ENCODE measurements at regions of chr14 and their contacts with region 1.

Region 1: DNA sequence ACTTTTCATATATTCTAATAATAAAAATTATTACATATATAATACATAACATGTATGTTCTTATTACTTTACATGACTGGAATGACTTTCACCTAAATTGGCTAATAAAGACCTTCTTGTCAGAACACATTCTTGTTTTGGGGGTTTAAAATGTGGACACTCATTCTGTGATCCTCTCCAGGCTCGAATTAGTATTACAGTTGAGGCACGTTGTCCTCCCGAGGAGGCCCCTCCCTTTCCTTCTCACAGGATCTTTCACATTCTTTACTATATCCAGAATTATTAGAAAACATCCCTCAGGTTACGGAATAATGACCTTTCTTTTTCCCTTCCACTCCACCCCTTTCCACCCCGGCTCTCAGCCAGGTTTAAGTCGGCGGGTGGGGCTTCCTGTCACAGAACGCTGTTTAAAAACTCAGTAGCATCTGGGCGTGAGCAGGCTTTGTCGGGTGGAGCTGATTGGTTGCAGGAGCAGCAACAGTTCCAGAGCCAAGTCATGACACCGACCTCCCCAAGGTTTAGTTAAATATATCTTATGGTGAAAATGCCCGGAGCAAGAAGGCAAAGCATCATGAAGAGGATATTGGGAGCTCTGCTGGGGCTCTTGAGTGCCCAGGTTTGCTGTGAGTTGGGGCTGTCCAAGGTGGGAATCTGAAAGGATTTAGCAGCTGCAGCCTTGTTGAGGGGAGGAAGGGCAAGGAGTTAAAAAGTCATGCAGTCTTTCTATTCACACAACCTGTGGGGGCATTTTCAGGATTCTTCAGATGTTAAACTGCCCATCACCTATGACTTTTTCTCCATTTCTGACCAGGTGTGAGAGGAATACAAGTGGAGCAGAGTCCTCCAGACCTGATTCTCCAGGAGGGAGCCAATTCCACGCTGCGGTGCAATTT is 396.7 kb upstream of the OR4E1 start:
- DNase-seq: peak; percentile 67
- H3K4me3 Mint-ChIP-seq: peak overlapping the region; percentile 88
- H3K27ac Mint-ChIP-seq: peak overlapping the region; percentile 90
- H3K4me1 Mint-ChIP-seq: peaks cover 33% of the 10 kb centered on the region
- H3K27me3 Mint-ChIP-seq: no peaks in the 10 kb centered on the region

Region 2: DNA sequence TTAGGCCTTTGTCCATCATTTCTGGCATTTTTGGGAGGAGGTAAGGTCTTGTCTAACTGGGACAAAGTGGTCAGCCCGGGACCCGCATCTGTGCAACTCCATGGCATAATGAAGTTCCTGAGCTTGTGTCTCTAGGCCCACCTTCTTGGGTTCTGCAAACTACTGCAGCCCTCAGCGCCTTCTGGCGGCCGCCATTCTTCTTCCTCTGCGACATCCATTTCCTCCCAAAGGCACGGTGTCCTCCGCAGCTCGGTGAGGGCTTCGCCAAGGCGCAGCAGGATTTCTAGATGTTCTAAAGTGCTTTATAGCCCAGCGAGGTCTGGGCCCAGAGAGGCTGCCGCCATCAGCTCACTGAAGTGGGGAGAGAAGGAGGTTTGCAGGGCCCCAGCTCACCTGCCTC is 262.4 kb before region 1 on chr14:
- CTCF ChIA-PET with region 1: no interaction called
- POLR2A ChIA-PET with region 1: no interaction called
- intact Hi-C with region 1: no loop called
- DNase-seq: no peak
- H3K4me3 Mint-ChIP-seq: no peak overlapping the region
- H3K27ac Mint-ChIP-seq: no peak overlapping the region
- H3K4me1 Mint-ChIP-seq: no peaks in the 10 kb centered on the region
- H3K27me3 Mint-ChIP-seq: peaks cover 15% of the 10 kb centered on the region

Region 3: GRCh38 chr14:22002860-22003309 is 67.5 kb before region 1 on chr14:
- CTCF ChIA-PET with region 1: no interaction called
- POLR2A ChIA-PET with region 1: interaction called, 3 read pairs
- intact Hi-C with region 1: loop called (anchors 2 kb)
- DNase-seq: peak; percentile 85
- H3K4me3 Mint-ChIP-seq: peak overlapping the region; percentile 71
- H3K27ac Mint-ChIP-seq: peak overlapping the region; percentile 80
- H3K4me1 Mint-ChIP-seq: peaks cover 19% of the 10 kb centered on the region
- H3K27me3 Mint-ChIP-seq: no peaks in the 10 kb centered on the region

Region 4: GRCh38 chr14:22052795-22053194 is 17.6 kb before region 1 on chr14:
- CTCF ChIA-PET with region 1: interaction called, 11 read pairs
- POLR2A ChIA-PET with region 1: no interaction called
- intact Hi-C with region 1: loop called (anchors 2 kb)
- DNase-seq: peak; percentile 41
- H3K4me3 Mint-ChIP-seq: peak overlapping the region; percentile 55
- H3K27ac Mint-ChIP-seq: peak overlapping the region; percentile 85
- H3K4me1 Mint-ChIP-seq: peaks cover 31% of the 10 kb centered on the region
- H3K27me3 Mint-ChIP-seq: no peaks in the 10 kb centered on the region

Region 5: GRCh38 chr14:22177870-22178269 is 107.5 kb after region 1 on chr14:
- CTCF ChIA-PET with region 1: no interaction called
- POLR2A ChIA-PET with region 1: no interaction called
- intact Hi-C with region 1: no loop called
- DNase-seq: no peak
- H3K4me3 Mint-ChIP-seq: no peak overlapping the region
- H3K27ac Mint-ChIP-seq: no peak overlapping the region
- H3K4me1 Mint-ChIP-seq: peaks cover 9% of the 10 kb centered on the region
- H3K27me3 Mint-ChIP-seq: no peaks in the 10 kb centered on the region

Region 6: DNA sequence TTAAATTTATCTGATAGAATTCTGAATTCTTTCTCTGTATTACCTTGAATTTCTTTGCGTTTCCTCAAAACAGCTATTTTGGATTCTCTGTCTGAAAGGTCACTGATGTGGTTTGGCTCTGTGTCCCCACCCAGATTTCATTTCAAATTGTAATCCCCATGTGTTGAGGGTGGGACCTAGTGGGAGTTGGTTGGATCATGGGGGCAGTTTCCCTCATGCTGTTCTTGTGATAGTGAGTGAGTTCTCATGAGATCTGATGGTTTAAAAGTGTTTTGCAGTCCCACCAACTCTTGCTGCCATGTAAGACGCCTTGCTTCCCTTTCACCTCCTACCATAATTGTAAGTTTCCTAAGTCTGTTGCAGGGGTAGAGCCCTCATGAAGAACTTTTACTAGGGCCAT is 607.9 kb after region 1 on chr14:
- CTCF ChIA-PET with region 1: no interaction called
- POLR2A ChIA-PET with region 1: no interaction called
- intact Hi-C with region 1: no loop called
- DNase-seq: no peak
- H3K4me3 Mint-ChIP-seq: no peak overlapping the region
- H3K27ac Mint-ChIP-seq: no peak overlapping the region
- H3K4me1 Mint-ChIP-seq: no peaks in the 10 kb centered on the region
- H3K27me3 Mint-ChIP-seq: peaks cover 43% of the 10 kb centered on the region